ENCODE measurements at regions of chr4 and their contacts with region 1.

Region 1: DNA sequence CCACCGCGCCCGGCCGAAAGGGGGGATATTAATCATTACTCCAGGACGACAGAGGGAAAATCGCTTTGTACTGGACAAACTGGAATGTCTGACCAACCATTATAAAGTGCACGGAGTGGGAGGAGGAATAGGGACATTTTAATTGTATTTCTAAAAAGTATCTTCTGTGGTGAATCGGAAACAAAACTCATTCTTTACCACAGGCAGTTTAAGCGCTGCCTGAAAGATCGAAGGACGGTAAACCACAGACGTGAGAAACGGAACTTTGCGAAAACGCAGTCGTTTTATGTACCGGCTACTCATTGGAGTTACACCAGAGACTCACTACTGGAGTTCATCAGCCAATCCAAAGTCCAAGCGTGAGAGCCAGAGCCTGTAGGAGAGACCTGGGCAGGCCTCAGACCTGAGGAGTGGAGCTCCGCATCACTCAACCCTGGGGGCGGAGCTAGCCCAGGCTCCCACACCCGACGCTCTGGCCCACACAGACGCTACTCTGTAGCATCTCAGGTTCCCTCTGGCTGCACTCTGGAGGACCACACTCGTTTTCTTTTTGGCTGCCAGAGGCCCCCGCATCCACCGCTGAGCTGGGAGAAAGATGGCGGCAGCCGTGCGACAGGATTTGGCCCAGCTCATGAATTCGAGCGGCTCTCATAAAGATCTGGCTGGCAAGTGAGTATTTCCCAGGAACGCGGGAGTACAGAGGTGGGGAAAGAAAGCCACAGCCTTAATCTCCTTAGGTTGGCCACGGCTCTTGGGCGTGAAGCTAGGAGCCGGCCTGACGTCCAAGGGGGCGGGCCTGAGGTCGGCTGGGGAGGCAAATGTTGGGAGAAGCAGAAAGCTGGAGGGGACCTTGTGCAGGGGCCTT is at the start of gene COPS4:
- DNase-seq: peak; percentile 96 to 98 (median 98)
- ATAC-seq: peak; percentile 100
- H3K4me3 ChIP-seq: peak within 1 kb of the TSS; percentile 63 to 92 (median 74)
- H3K27ac ChIP-seq: peak within 1 kb of the TSS; percentile 71 to 94 (median 89)
- H3K4me1 ChIP-seq: peaks cover 0 to 32% (median 18%) of the 10 kb centered on the region in 12 donors
- H3K27me3 ChIP-seq: no peaks in the 10 kb centered on the region
- CTCF ChIP-seq: peak in 11 of 12 donors; percentile 14 to 71 (median 54)
- POLR2A ChIP-seq: peak; percentile 21 to 61
- total RNA-seq, gene COPS4: 47.6 to 67.2 (median 54.5) TPM

Region 2: DNA sequence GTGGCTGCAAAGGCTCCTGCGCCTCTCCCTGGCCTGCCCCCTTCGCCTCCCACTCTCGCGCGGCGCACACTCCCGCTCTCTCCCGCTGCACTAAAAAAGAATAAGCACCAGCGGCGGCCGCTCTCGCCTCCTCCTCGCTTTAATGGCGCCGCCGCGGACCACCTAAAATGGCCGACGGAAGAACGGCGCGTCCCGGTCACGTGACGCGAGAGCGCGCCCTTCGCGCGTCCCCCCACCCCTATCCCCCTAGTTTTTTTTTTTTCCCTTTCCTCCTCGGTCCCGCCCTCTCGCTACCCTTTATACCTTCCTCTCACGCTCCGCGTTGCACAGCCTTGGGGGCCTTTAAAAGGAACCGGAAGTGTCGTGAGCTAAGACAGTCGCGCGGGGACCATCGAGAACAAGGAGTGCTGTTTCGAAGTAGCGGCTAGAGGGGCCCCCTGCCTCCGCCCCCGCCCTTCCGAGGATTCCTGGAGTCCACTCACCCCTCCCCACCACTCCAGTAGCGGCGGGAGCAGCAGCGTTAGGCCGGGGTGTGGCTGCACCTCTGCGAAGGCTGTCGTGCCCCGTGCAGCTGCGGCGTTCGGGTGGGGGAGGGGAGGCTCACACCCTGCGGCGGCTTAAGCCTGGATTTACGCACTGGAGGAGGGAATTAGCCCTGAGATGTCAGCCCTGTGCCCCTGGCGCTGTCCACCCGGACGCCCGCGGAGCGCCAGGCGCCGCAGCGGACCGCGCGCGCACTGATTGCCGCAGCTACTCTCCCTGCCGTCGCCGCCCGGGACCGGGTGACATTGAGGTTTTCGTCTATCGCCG is 660.8 kb before region 1 on chr4 and contains the start of gene HNRNPD:
- intact Hi-C with region 1: loop called in 2 of 10 experiments (anchors 10 kb)
- DNase-seq: peak; percentile 98 to 99 (median 98)
- ATAC-seq: peak; percentile 92 to 97 (median 96)
- H3K4me3 ChIP-seq: peak within 1 kb of the TSS; percentile 73 to 99 (median 94)
- H3K27ac ChIP-seq: peak within 1 kb of the TSS; percentile 94 to 100 (median 99)
- H3K4me1 ChIP-seq: peaks cover 12 to 48% (median 34%) of the 10 kb centered on the region in 12 donors
- H3K27me3 ChIP-seq: no peaks in the 10 kb centered on the region
- CTCF ChIP-seq: peak in 1 of 12 donors; percentile 30
- POLR2A ChIP-seq: peak; percentile 3 to 90
- total RNA-seq, gene HNRNPD: 33.8 to 150 (median 122) TPM

Region 3: DNA sequence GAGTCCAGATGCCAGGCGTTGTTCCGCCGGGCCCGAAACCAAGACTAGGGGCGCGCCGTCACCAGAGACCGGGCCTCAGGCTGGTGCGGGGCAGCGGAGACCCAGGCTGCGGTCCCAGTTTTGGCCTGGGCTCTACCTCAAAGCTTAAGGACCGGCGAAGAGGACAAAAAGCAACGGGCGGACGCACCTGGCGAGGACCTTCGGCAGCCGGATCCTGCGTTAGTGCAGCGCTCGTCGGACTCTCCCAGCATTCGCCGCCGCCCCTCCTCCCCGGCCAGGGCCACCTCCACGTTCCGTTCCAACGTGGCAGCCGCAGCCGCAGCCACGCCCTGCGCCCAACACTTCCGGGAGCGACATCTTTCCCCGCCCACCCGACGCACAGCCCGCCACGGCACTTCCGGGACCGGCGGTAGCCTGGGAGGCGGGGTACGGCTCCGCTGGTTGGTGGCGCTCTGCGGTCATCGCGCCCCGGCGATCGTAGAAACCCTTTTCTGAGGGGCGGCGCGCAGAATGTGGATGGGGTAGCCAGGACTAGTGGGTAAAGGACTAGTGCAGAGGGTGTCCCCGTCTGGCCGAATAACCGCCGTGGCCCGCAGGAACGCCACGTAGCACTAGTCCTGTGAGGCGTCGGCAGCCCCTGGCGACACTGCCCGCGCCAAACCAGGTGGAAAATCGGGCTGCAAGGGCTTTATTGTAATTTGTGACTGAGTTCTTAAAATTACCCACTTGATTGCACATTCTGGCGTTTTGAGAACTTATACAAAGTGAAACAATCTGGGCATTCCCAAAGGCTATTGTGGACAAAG is 143.8 kb before region 1 on chr4 and contains the start of gene SEC31A:
- intact Hi-C with region 1: loop called in 3 of 10 experiments (anchors 10 kb)
- DNase-seq: peak; percentile 97 to 99 (median 98)
- ATAC-seq: peak; percentile 98 to 99 (median 98)
- H3K4me3 ChIP-seq: peak within 1 kb of the TSS; percentile 69 to 98 (median 82)
- H3K27ac ChIP-seq: peak within 1 kb of the TSS; percentile 85 to 99 (median 96)
- H3K4me1 ChIP-seq: peaks cover 0 to 39% (median 33%) of the 10 kb centered on the region in 12 donors
- H3K27me3 ChIP-seq: no peaks in the 10 kb centered on the region
- CTCF ChIP-seq: peak in 4 of 12 donors; percentile 7 to 35 (median 26)
- POLR2A ChIP-seq: peak in 1 of 2 donors; percentile 88
- total RNA-seq, gene SEC31A: 81.0 to 168 (median 101) TPM

Region 4: GRCh38 chr4:82918091-82918490 is 116.8 kb before region 1 on chr4:
- intact Hi-C with region 1: no loop called
- DNase-seq: no peak
- ATAC-seq: no peak
- H3K4me3 ChIP-seq: no peak overlapping the region
- H3K27ac ChIP-seq: no peak overlapping the region
- H3K4me1 ChIP-seq: no peaks in the 10 kb centered on the region
- H3K27me3 ChIP-seq: no peaks in the 10 kb centered on the region
- CTCF ChIP-seq: no peak
- POLR2A ChIP-seq: no peak

Region 5: DNA sequence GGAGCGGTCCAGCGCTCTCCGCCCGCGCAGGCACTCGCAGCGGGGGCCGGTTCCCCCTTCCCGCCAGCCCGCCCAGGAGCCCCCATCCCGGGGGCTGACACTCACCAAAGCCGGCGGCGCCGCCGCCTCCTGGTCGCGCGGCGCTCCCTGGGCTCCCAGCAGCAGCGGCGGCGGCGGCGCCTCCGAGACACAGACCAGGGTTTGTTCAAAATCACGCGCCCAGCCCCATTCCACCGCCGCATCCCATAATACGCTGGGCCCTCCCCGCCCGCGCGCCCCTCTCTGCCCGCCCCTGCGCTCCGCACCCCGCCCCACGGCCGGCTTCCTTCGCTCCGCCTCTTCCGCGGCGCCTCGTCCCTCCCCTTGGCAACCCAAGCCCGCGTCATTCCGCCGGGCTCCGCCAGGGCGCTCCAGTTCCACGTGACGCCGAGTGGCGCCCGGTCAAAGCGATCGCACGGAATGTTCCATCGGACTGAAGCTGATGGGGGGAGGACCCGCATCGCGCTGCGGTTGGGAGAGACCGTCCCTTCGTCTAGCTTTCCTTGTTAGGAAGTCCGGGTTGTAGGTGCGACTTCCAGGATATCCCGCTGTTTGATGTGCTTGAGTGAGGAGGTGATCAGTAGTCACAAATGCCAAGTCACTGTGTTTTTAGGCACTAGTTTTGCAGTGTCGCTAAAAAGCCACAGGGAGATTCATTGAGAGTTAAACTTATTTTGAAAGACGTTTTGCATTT is 22.0 kb before region 1 on chr4:
- intact Hi-C with region 1: loop called in 9 of 10 experiments (anchors 1 to 2 kb)
- DNase-seq: peak; percentile 97 to 99 (median 98)
- ATAC-seq: peak; percentile 98 to 99 (median 98)
- H3K4me3 ChIP-seq: peak overlapping the region; percentile 43 to 94 (median 73)
- H3K27ac ChIP-seq: peak overlapping the region; percentile 62 to 95 (median 80)
- H3K4me1 ChIP-seq: peaks cover 0 to 41% (median 23%) of the 10 kb centered on the region in 12 donors
- H3K27me3 ChIP-seq: no peaks in the 10 kb centered on the region
- CTCF ChIP-seq: peak in 11 of 12 donors; percentile 37 to 67 (median 54)
- POLR2A ChIP-seq: peak in 1 of 2 donors; percentile 49

Region 6: DNA sequence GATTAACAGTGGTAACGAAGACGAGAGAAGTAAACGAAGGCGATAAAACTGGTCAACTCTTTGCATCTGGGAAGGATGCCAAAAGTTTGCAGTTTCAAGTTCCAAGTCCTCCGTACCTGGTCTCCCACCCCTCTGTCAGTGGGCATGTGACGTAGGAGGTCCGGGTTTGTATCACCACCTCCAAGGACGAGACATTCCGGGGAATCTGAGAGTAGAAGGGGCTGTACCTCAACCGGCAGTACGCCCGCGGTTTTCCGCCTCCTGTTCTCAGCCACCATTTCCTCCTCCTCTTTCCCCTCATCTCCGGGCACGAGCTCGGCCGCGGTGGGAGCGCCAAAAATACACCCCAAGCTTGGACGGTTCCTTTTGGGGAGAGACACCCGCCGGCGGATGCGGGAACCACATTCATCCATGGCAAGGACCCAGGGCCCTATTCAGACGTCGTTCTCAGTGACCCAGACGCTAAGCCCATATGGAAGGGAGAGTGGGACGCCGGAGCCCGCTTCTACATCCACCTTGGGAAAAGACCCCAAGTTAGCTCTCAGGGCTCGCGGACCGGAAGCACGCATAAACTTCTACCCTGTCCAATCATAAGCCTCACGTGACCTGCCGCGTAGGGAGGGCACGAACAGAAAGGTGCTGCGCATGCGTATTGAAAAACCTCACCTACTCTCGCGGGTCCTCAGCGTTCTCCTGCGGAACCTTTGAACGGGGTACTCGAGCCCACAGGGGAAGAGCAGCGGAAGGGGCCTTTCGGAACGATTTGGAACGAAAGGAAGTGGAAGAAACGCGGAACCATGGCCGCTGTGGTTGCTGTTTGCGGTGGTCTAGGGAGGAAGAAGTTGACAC is 420.6 kb after region 1 on chr4 and contains the starts of genes HELQ and MRPS18C:
- intact Hi-C with region 1: loop called in 1 of 10 experiments (anchors 10 kb)
- DNase-seq: peak; percentile 96 to 98 (median 98)
- ATAC-seq: peak; percentile 99
- H3K4me3 ChIP-seq: peak within 1 kb of the TSS; percentile 48 to 92 (median 81)
- H3K27ac ChIP-seq: peak within 1 kb of the TSS; percentile 79 to 99 (median 96)
- H3K4me1 ChIP-seq: peaks cover 0 to 29% (median 21%) of the 10 kb centered on the region in 12 donors
- H3K27me3 ChIP-seq: no peaks in the 10 kb centered on the region
- CTCF ChIP-seq: peak in 5 of 12 donors; percentile 18 to 31 (median 22)
- POLR2A ChIP-seq: peak in 1 of 2 donors; percentile 77
- total RNA-seq, gene HELQ: 12.2 to 15.8 (median 13.1) TPM
- total RNA-seq, gene MRPS18C: 27.8 to 67.5 (median 51.7) TPM